ENCODE measurements at regions of chr17 and their contacts with region 1.

Region 1: GRCh38 chr17:49788478-49789242 is at the start of gene KAT7:
- DNase-seq: peak; percentile 99
- ATAC-seq: peak; percentile 98
- H3K4me3 ChIP-seq: peak within 1 kb of the TSS; percentile 64 to 86
- H3K27ac ChIP-seq: peak within 1 kb of the TSS; percentile 73 to 98
- H3K4me1 ChIP-seq: no peaks in the 10 kb centered on the region
- H3K27me3 ChIP-seq: no peaks in the 10 kb centered on the region
- total RNA-seq, gene KAT7: 60.8 to 63.9 TPM

Region 2: GRCh38 chr17:49763735-49764558 is 24.7 kb before region 1 on chr17 and contains the start of gene FAM117A:
- intact Hi-C with region 1: loop called in 1 of 2 experiments (anchors 1 kb)
- DNase-seq: peak; percentile 95 to 97
- ATAC-seq: peak; percentile 98
- H3K4me3 ChIP-seq: peak within 1 kb of the TSS; percentile 92 to 94
- H3K27ac ChIP-seq: no peak within 1 kb of the TSS
- H3K4me1 ChIP-seq: no peaks in the 10 kb centered on the region
- H3K27me3 ChIP-seq: no peaks in the 10 kb centered on the region
- total RNA-seq, gene FAM117A: 16.9 to 17.2 TPM

Region 3: DNA sequence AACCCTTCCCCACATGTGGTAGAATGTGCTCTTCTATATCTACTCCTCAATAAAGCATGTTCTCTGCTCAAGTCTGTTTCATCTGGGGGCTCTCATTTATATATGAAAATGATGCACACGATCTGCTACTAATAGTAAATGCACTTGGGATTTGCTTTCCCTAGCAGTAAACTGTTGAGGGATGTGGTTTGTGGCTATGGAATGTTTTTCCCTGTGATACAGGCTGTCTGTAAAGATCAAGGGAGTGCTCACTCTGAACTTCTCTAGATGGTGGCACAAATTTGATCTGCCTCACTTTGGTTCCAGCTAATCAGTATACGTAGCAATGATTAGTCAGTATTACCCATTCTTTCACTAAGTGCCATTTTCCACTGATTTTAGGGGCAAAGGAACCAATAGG is 40.4 kb after region 1 on chr17:
- intact Hi-C with region 1: loop called in 1 of 2 experiments (anchors 5 kb)
- DNase-seq: no peak
- ATAC-seq: no peak
- H3K4me3 ChIP-seq: no peak overlapping the region
- H3K27ac ChIP-seq: no peak overlapping the region
- H3K4me1 ChIP-seq: peaks cover 0 to 4% of the 10 kb centered on the region in 2 donors
- H3K27me3 ChIP-seq: no peaks in the 10 kb centered on the region

Region 4: GRCh38 chr17:49836111-49837030 is 47.7 kb after region 1 on chr17:
- intact Hi-C with region 1: loop called in 1 of 2 experiments (anchors 5 kb)
- DNase-seq: peak in 1 of 2 donors; percentile 73
- ATAC-seq: peak; percentile 69
- H3K4me3 ChIP-seq: no peak overlapping the region
- H3K27ac ChIP-seq: peak overlapping the region; percentile 61 to 98
- H3K4me1 ChIP-seq: peaks cover 2 to 4% of the 10 kb centered on the region in 2 donors
- H3K27me3 ChIP-seq: no peaks in the 10 kb centered on the region

Region 5: GRCh38 chr17:49845321-49845720 is 56.7 kb after region 1 on chr17:
- intact Hi-C with region 1: loop called in 1 of 2 experiments (anchors 5 kb)
- DNase-seq: peak in 1 of 2 donors; percentile 73
- ATAC-seq: peak; percentile 75
- H3K4me3 ChIP-seq: no peak overlapping the region
- H3K27ac ChIP-seq: peak overlapping the region in 1 of 2 donors; percentile 18
- H3K4me1 ChIP-seq: peaks cover 0 to 2% of the 10 kb centered on the region in 2 donors
- H3K27me3 ChIP-seq: no peaks in the 10 kb centered on the region

Measured in aorta (tissue), 5 donors.